Ovary (tissue), 10 donors: ENCODE measurements at regions of chr1 and their contacts with region 1.

Region 1: GRCh38 chr1:169348383-169349036 is 19.1 kb downstream of the NME7 start:
- DNase-seq: no peak
- H3K4me3 ChIP-seq: no peak overlapping the region
- H3K27ac ChIP-seq: no peak overlapping the region
- H3K4me1 ChIP-seq: no peaks in the 10 kb centered on the region
- H3K27me3 ChIP-seq: no peaks in the 10 kb centered on the region
- CTCF ChIP-seq: peak; percentile 58 to 80 (median 60)
- EP300 ChIP-seq: no peak
- POLR2A ChIP-seq: no peak

Region 2: GRCh38 chr1:168365719-168366479 is 982.6 kb before region 1 on chr1:
- intact Hi-C with region 1: no loop called
- DNase-seq: no peak
- H3K4me3 ChIP-seq: no peak overlapping the region
- H3K27ac ChIP-seq: no peak overlapping the region
- H3K4me1 ChIP-seq: no peaks in the 10 kb centered on the region
- H3K27me3 ChIP-seq: no peaks in the 10 kb centered on the region
- CTCF ChIP-seq: no peak
- EP300 ChIP-seq: no peak
- POLR2A ChIP-seq: no peak

Region 3: GRCh38 chr1:168603501-168604110 is 744.9 kb before region 1 on chr1:
- intact Hi-C with region 1: loop called (anchors 2 to 10 kb)
- DNase-seq: peak; percentile 74 to 87 (median 82)
- H3K4me3 ChIP-seq: no peak overlapping the region
- H3K27ac ChIP-seq: no peak overlapping the region
- H3K4me1 ChIP-seq: peaks cover 2% of the 10 kb centered on the region
- H3K27me3 ChIP-seq: no peaks in the 10 kb centered on the region
- CTCF ChIP-seq: peak; percentile 65 to 77 (median 76)
- EP300 ChIP-seq: no peak
- POLR2A ChIP-seq: no peak

Region 4: GRCh38 chr1:168609133-168609715 is 739.3 kb before region 1 on chr1:
- intact Hi-C with region 1: loop called in 3 of 4 experiments (anchors 5 to 10 kb)
- DNase-seq: peak; percentile 68 to 81 (median 72)
- H3K4me3 ChIP-seq: no peak overlapping the region
- H3K27ac ChIP-seq: no peak overlapping the region
- H3K4me1 ChIP-seq: peaks cover 9% of the 10 kb centered on the region
- H3K27me3 ChIP-seq: no peaks in the 10 kb centered on the region
- CTCF ChIP-seq: no peak
- EP300 ChIP-seq: no peak
- POLR2A ChIP-seq: no peak

Region 5: GRCh38 chr1:169885207-169885606 is 536.7 kb after region 1 on chr1:
- intact Hi-C with region 1: no loop called
- DNase-seq: no peak
- H3K4me3 ChIP-seq: no peak overlapping the region
- H3K27ac ChIP-seq: no peak overlapping the region
- H3K4me1 ChIP-seq: no peaks in the 10 kb centered on the region
- H3K27me3 ChIP-seq: no peaks in the 10 kb centered on the region
- CTCF ChIP-seq: no peak
- EP300 ChIP-seq: no peak
- POLR2A ChIP-seq: no peak